ENCODE measurements at regions of chr11 and their contacts with region 1.

Region 1: DNA sequence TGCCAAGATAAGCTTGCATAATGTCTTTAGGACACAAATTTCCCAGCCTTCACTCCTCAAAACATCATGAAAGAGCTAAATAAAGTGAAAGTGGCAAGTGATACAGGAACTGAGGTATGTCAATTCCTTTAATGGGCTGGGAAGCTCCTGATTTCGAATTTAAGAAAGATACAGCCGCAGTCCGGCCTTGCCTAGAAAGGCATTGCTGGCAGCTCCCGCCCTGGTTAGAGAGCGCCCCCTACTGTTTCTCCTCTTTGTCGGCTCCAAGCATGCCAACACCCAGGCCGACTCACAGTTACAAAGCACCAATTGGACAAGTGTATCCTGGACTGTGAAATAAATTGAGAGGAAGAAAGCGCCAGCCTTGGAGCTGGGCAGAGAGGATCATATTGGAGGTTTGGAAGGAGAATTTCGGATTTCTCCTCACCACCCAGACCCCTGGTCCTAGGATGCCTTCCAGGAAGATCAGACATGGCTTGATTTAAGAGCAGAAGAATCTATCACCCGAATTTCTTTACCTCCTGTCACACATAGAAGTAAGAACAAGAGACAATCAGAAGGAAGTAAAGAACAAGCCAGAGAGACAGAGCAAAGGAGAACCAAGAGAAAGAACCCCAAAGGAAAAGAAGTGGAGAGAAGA is 84.0 kb downstream of the FAM76B start:
- DNase-seq: no peak
- ATAC-seq: peak; percentile 98
- H3K4me3 ChIP-seq: no peak overlapping the region
- H3K27ac ChIP-seq: no peak overlapping the region
- H3K4me1 ChIP-seq: peaks cover 6% of the 10 kb centered on the region
- H3K27me3 ChIP-seq: no peaks in the 10 kb centered on the region
- CTCF ChIP-seq: peak; percentile 92 to 97 (median 93)
- EP300 ChIP-seq: no peak
- POLR2A ChIP-seq: no peak
- RAD21 ChIP-seq: peak; percentile 99

Region 2: DNA sequence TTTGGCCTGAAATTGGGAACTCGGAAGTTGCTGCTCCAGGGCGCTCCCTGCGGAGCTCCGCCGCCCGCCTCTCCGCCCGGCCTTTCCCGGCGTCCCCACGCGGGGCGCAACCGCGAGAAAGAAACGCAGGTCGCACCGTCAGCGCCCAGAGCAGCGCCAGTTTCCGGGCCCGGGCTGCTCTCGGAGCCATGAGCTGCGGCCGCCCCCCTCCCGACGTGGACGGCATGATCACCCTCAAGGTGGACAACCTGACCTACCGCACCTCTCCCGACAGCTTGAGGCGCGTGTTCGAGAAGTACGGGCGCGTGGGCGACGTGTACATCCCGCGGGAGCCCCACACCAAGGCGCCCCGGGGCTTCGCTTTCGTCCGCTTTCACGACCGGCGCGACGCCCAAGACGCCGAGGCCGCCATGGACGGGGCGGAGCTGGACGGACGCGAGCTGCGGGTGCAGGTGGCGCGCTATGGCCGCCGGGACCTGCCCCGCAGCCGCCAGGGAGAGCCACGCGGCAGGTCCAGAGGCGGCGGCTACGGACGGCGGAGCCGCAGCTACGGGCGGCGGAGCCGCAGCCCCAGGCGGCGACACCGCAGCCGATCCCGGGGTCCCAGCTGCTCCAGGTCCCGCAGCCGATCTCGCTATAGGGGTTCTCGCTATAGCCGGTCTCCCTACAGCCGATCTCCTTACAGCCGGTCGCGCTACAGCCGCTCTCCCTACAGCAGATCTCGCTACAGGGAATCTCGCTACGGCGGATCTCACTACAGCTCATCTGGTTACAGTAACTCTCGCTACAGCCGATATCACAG is 638.4 kb before region 1 on chr11:
- CTCF ChIA-PET with region 1: interaction called, 13 read pairs
- POLR2A ChIA-PET with region 1: interaction called, 3 read pairs
- RAD21 ChIA-PET with region 1: interaction called, 5 read pairs
- SMC1A ChIA-PET with region 1: interaction called, 8 read pairs
- in situ Hi-C with region 1: no loop called
- intact Hi-C with region 1: loop called (anchors 2 kb)
- DNase-seq: no peak
- ATAC-seq: peak; percentile 80
- H3K4me3 ChIP-seq: peak overlapping the region; percentile 99
- H3K27ac ChIP-seq: peak overlapping the region; percentile 75
- H3K4me1 ChIP-seq: 0 out of 2 replicates have a peak, but pooled peaks cover 3% of the 10 kb centered on the region
- H3K27me3 ChIP-seq: no peaks in the 10 kb centered on the region
- CTCF ChIP-seq: peak; percentile 40 to 63 (median 54)
- EP300 ChIP-seq: no peak
- POLR2A ChIP-seq: peak; percentile 90
- RAD21 ChIP-seq: 0 out of 2 replicates have a peak, but pooled peaks have one; percentile 15

Region 3: DNA sequence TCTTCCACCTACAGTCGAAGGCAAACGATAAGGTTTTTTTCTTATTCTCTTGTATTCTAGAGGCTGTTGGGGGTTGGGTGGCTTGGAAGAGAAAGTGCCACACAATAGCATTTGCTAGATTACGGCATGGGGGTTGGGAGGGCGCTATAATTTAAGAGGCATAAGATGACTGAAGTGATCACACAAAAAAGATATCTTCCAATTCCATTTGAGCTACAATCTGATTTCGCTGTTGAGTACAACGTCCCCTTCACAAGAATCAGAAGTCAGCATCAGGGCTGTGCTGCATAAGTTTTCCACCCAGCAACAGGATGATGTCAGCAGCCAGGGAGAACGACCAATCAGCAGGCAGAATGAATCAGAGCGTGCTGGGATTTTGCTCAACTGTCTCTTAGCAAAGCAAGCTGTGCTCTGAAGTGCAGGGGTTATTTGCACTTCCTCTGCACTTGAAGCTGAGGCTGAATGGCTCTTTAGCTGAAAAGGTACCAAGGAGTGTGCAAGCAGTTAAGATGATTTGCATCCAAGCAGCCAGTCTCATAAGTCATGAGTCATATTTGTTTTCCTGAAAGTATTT is 451.4 kb before region 1 on chr11:
- CTCF ChIA-PET with region 1: interaction called, 11 read pairs
- POLR2A ChIA-PET with region 1: interaction called, 7 read pairs
- RAD21 ChIA-PET with region 1: interaction called, 27 read pairs
- SMC1A ChIA-PET with region 1: interaction called, 16 read pairs
- in situ Hi-C with region 1: no loop called
- intact Hi-C with region 1: loop called (anchors 2 kb)
- DNase-seq: peak; percentile 96
- ATAC-seq: peak; percentile 96
- H3K4me3 ChIP-seq: 0 out of 2 replicates have a peak overlapping the region, but pooled peaks have one; percentile 0
- H3K27ac ChIP-seq: peak overlapping the region; percentile 77
- H3K4me1 ChIP-seq: peaks cover 47% of the 10 kb centered on the region
- H3K27me3 ChIP-seq: no peaks in the 10 kb centered on the region
- CTCF ChIP-seq: no peak
- EP300 ChIP-seq: peak in 1 of 2 experiments; percentile 63; a peak in 2 of 4 replicates
- POLR2A ChIP-seq: peak; percentile 64
- RAD21 ChIP-seq: no peak

Region 4: DNA sequence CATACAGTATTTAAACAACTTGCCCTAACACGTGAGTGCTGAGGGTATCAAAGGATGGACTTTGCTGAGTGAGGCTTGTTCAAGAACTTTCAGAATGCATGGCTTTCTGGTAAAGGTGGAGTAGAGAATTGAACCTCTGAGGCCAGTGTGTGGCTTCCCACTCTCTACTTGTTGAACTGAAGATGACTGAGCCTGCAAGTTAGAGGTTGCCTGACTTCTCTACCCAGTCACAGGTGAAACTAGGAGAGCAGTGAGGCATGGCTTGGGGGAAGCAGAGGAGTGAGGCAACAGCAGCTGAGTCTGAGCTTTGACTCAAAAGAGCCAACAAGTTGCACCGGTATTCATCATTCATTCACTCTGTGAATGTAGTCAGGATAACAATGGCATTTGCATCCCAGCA is 218.2 kb before region 1 on chr11:
- CTCF ChIA-PET with region 1: no interaction called
- POLR2A ChIA-PET with region 1: no interaction called
- RAD21 ChIA-PET with region 1: interaction called, 5 read pairs
- SMC1A ChIA-PET with region 1: interaction called, 3 read pairs
- in situ Hi-C with region 1: no loop called
- intact Hi-C with region 1: loop called (anchors 10 kb)
- DNase-seq: peak; percentile 83
- ATAC-seq: peak; percentile 100
- H3K4me3 ChIP-seq: no peak overlapping the region
- H3K27ac ChIP-seq: no peak overlapping the region
- H3K4me1 ChIP-seq: peaks cover 4% of the 10 kb centered on the region; the same call in 1 of the 2 replicates
- H3K27me3 ChIP-seq: peaks cover 0 to 2% of the 10 kb centered on the region in 2 experiments; a peak in 1 of 4 replicates
- CTCF ChIP-seq: no peak
- EP300 ChIP-seq: peak; percentile 37 to 60; a peak in 1 of 4 replicates
- POLR2A ChIP-seq: no peak
- RAD21 ChIP-seq: no peak

Region 5: DNA sequence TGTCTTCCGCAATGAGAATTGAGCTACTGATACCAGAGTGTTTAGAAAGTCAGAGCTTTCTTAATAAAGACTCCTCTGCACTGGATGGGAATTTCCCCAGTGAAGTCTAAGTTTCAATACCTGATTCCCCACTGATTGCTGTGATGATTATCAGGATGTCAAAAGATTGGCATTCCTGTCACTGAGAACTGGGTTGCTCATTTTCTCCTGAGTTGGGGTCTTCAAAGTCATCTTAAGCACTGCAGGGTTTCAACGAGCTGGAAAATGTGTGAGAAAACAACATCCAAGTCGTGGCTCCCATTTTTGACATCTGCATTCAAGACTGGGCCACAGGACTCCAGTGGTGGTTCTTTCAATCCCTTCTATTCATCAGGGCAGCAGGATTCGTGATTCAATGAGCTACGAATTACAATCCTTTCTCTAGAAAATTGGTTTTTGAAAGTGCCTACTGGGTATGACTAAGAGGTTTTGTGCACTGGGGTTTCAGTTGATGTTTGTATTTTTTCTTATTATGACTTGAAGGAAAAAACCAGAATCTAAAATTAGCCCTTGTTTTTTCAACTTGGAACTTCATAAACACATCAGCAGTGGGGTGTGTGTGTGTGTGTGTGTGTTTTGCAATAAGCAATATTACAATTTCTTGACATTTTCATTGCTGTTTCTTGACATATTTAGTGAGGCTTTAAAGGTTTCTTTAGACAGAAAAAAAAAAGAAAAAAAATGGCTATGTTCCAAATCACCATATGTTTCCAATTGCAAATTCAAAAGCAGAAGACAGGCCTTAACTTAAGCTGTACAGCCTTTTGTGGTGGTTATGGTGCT is 149.1 kb before region 1 on chr11:
- CTCF ChIA-PET with region 1: interaction called, 15 read pairs
- POLR2A ChIA-PET with region 1: interaction called, 4 read pairs
- RAD21 ChIA-PET with region 1: interaction called, 28 read pairs
- SMC1A ChIA-PET with region 1: interaction called, 57 read pairs
- in situ Hi-C with region 1: no loop called
- intact Hi-C with region 1: loop called (anchors 1 kb)
- DNase-seq: peak; percentile 75
- ATAC-seq: peak; percentile 91
- H3K4me3 ChIP-seq: peak overlapping the region; percentile 22; the same call in 1 of the 2 replicates
- H3K27ac ChIP-seq: peak overlapping the region; percentile 86
- H3K4me1 ChIP-seq: peaks cover 21% of the 10 kb centered on the region
- H3K27me3 ChIP-seq: no peaks in the 10 kb centered on the region
- CTCF ChIP-seq: no peak
- EP300 ChIP-seq: peak; percentile 88 to 89
- POLR2A ChIP-seq: no peak
- RAD21 ChIP-seq: no peak

Region 6: DNA sequence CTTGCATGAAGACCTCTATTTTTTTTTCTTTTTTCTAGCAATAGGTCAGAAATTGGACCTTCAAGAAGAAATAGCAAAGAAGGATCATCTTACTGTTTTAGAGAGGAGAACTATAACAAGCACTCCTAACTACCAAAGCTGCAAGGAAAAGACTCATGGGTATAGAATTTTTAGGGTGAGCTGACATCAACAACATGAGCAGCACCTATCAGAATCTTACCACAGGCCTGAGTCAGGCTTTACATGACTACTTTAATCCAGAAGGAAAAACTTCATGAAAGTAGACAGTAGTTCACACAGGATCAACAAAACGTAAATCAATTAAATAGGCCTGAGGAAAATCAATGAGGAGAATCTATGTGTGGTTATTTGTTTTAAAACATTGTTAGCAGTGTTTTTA is 46.5 kb before region 1 on chr11:
- CTCF ChIA-PET with region 1: interaction called, 11 read pairs
- POLR2A ChIA-PET with region 1: no interaction called
- RAD21 ChIA-PET with region 1: interaction called, 10 read pairs
- SMC1A ChIA-PET with region 1: interaction called, 9 read pairs
- in situ Hi-C with region 1: no loop called
- intact Hi-C with region 1: no loop called
- DNase-seq: no peak
- ATAC-seq: no peak
- H3K4me3 ChIP-seq: no peak overlapping the region
- H3K27ac ChIP-seq: no peak overlapping the region
- H3K4me1 ChIP-seq: no peaks in the 10 kb centered on the region
- H3K27me3 ChIP-seq: no peaks in the 10 kb centered on the region
- CTCF ChIP-seq: no peak
- EP300 ChIP-seq: no peak
- POLR2A ChIP-seq: no peak
- RAD21 ChIP-seq: no peak

Region 7: DNA sequence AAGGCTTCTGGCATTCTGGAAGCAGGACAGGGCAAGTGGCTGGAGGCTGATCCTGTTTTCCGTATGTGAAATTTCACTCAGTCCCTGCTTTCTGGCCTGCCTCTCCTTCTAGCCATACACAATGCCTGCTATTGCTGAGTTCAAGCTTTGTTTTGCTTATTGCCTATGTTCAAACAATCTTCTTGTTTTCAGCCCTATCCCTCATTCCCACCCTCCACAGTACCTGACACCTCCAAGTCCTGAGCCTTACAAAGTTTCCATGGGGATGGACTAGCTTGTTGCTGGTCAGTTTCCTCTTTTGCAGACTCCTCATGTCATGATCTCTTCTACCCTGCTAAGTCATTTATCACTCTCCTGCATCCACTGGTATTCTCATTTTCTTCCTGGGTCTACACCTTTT is 45.9 kb after region 1 on chr11:
- CTCF ChIA-PET with region 1: interaction called, 13 read pairs
- POLR2A ChIA-PET with region 1: no interaction called
- RAD21 ChIA-PET with region 1: interaction called, 4 read pairs
- SMC1A ChIA-PET with region 1: interaction called, 10 read pairs
- in situ Hi-C with region 1: no loop called
- intact Hi-C with region 1: no loop called
- DNase-seq: no peak
- ATAC-seq: no peak
- H3K4me3 ChIP-seq: no peak overlapping the region
- H3K27ac ChIP-seq: no peak overlapping the region
- H3K4me1 ChIP-seq: no peaks in the 10 kb centered on the region
- H3K27me3 ChIP-seq: no peaks in the 10 kb centered on the region
- CTCF ChIP-seq: no peak
- EP300 ChIP-seq: no peak
- POLR2A ChIP-seq: no peak
- RAD21 ChIP-seq: no peak

Region 8: GRCh38 chr11:96267496-96268032 is 562.0 kb after region 1 on chr11:
- CTCF ChIA-PET with region 1: no interaction called
- POLR2A ChIA-PET with region 1: no interaction called
- RAD21 ChIA-PET with region 1: no interaction called
- SMC1A ChIA-PET with region 1: no interaction called
- in situ Hi-C with region 1: no loop called
- intact Hi-C with region 1: no loop called
- DNase-seq: peak; percentile 95
- ATAC-seq: peak; percentile 97
- H3K4me3 ChIP-seq: no peak overlapping the region
- H3K27ac ChIP-seq: peak overlapping the region; percentile 73
- H3K4me1 ChIP-seq: peaks cover 21% of the 10 kb centered on the region
- H3K27me3 ChIP-seq: no peaks in the 10 kb centered on the region
- CTCF ChIP-seq: no peak
- EP300 ChIP-seq: no peak; a peak in 1 of 4 replicates
- POLR2A ChIP-seq: peak; percentile 38; the same call in 1 of the 2 replicates
- RAD21 ChIP-seq: peak; percentile 21; the same call in 1 of the 2 replicates

Measured in GM12878 (cell line).